ENCODE measurements at regions of chr1 and their contacts with region 1.

Region 1: GRCh38 chr1:198681831-198682759 is 43.3 kb downstream of the PTPRC start:
- DNase-seq: peak; percentile 28 to 96 (median 92)
- ATAC-seq: peak; percentile 89
- H3K4me3 ChIP-seq: peak overlapping the region; percentile 51
- H3K4me3 Mint-ChIP-seq: peak overlapping the region; percentile 74 to 87 (median 77)
- H3K27ac ChIP-seq: peak overlapping the region; percentile 92
- H3K27ac Mint-ChIP-seq: peak overlapping the region; percentile 90 to 99 (median 98)
- H3K4me1 ChIP-seq: peaks cover 88 to 90% of the 10 kb centered on the region in 2 donors
- H3K4me1 Mint-ChIP-seq: peaks cover 53 to 94% (median 81%) of the 10 kb centered on the region in 7 donors
- H3K27me3 ChIP-seq: no peaks in the 10 kb centered on the region
- H3K27me3 Mint-ChIP-seq: peaks cover 0 to 2% (median 0%) of the 10 kb centered on the region in 5 donors

Region 2: DNA sequence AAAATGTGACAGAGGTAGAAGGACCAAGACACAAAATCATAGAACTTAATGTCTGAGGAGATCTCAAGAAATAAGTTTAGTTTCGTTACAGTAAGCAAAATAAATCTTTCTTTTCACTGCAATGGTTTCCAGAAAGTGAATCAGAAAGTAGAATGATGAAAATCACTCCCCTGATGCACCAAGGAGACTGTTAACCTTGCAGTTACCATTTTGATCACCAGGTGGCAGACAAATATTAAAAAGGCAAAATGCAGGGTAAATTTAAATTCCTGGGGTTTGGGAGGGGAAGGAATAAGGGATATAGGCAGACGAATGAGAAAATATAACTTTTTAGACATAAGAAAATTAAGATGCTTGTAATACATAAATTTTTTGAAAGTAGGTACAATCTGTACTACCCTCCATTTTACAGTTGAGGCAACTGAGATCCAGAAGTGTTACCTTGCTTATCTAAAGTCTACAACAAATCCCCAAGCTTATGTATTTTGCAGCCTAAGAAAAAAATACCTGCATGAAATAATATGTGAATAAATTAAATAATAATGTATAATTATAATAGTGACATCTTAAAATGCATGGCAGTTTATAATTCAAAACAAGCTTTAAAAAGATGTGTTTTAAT is 1160.9 kb before region 1 on chr1:
- CTCF ChIA-PET with region 1: no interaction called
- POLR2A ChIA-PET with region 1: no interaction called
- intact Hi-C with region 1: loop called in 1 of 2 experiments (anchors 10 kb)
- DNase-seq: peak in 7 of 9 donors; percentile 2 to 34 (median 24)
- ATAC-seq: no peak
- H3K4me3 ChIP-seq: no peak overlapping the region
- H3K4me3 Mint-ChIP-seq: no peak overlapping the region
- H3K27ac ChIP-seq: no peak overlapping the region
- H3K27ac Mint-ChIP-seq: no peak overlapping the region
- H3K4me1 ChIP-seq: no peaks in the 10 kb centered on the region
- H3K4me1 Mint-ChIP-seq: peaks cover 0 to 5% (median 0%) of the 10 kb centered on the region in 7 donors
- H3K27me3 ChIP-seq: no peaks in the 10 kb centered on the region
- H3K27me3 Mint-ChIP-seq: no peaks in the 10 kb centered on the region

Region 3: DNA sequence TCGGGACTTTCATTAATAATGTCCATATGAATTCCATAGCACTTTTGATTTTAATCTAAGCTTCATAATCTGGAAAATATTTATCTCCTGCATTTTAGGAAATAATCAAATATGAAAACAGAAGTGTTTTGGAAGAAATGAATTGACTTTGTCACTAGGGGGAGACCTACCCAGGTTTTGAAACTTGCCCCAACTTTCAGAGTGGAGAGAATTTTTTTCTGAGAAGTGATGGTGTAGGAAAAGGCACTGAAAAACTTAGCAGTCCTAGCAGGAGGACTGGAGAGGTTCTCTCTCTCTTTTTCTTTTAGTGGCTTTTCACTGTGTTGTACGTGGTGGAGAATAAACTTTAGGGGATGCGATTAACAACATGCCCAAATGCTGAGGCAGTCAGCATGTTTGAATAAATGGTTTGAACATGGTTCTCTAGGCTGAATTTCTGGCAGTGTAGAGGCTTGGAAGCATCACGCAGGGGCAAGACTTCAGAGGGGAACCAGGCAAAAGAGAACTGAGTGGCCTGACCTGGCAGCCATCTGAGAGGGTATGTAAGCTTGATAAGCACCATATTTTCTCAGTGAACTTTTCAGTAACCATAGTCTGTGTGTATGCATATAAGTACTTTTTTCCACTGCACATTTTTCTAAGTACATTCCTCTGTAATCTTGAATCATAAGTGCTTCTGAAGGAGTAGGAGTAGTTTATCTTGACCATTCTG is 593.6 kb before region 1 on chr1:
- CTCF ChIA-PET with region 1: no interaction called
- POLR2A ChIA-PET with region 1: no interaction called
- intact Hi-C with region 1: loop called in 1 of 2 experiments (anchors 2 kb)
- DNase-seq: peak in 6 of 9 donors; percentile 9 to 52 (median 37)
- ATAC-seq: peak; percentile 40
- H3K4me3 ChIP-seq: no peak overlapping the region
- H3K4me3 Mint-ChIP-seq: no peak overlapping the region
- H3K27ac ChIP-seq: no peak overlapping the region
- H3K27ac Mint-ChIP-seq: no peak overlapping the region
- H3K4me1 ChIP-seq: no peaks in the 10 kb centered on the region
- H3K4me1 Mint-ChIP-seq: peaks cover 0 to 7% (median 3%) of the 10 kb centered on the region in 7 donors
- H3K27me3 ChIP-seq: no peaks in the 10 kb centered on the region
- H3K27me3 Mint-ChIP-seq: peaks cover 0 to 8% (median 4%) of the 10 kb centered on the region in 5 donors

Region 4: GRCh38 chr1:198465201-198466144 is 216.6 kb before region 1 on chr1:
- CTCF ChIA-PET with region 1: interaction called, 3 read pairs
- POLR2A ChIA-PET with region 1: no interaction called
- intact Hi-C with region 1: loop called (anchors 2 to 5 kb)
- DNase-seq: peak in 6 of 9 donors; percentile 3 to 57 (median 40)
- ATAC-seq: peak; percentile 71
- H3K4me3 ChIP-seq: no peak overlapping the region
- H3K4me3 Mint-ChIP-seq: no peak overlapping the region
- H3K27ac ChIP-seq: no peak overlapping the region
- H3K27ac Mint-ChIP-seq: no peak overlapping the region
- H3K4me1 ChIP-seq: no peaks in the 10 kb centered on the region
- H3K4me1 Mint-ChIP-seq: peaks cover 0 to 5% (median 0%) of the 10 kb centered on the region in 7 donors
- H3K27me3 ChIP-seq: no peaks in the 10 kb centered on the region
- H3K27me3 Mint-ChIP-seq: no peaks in the 10 kb centered on the region

Region 5: DNA sequence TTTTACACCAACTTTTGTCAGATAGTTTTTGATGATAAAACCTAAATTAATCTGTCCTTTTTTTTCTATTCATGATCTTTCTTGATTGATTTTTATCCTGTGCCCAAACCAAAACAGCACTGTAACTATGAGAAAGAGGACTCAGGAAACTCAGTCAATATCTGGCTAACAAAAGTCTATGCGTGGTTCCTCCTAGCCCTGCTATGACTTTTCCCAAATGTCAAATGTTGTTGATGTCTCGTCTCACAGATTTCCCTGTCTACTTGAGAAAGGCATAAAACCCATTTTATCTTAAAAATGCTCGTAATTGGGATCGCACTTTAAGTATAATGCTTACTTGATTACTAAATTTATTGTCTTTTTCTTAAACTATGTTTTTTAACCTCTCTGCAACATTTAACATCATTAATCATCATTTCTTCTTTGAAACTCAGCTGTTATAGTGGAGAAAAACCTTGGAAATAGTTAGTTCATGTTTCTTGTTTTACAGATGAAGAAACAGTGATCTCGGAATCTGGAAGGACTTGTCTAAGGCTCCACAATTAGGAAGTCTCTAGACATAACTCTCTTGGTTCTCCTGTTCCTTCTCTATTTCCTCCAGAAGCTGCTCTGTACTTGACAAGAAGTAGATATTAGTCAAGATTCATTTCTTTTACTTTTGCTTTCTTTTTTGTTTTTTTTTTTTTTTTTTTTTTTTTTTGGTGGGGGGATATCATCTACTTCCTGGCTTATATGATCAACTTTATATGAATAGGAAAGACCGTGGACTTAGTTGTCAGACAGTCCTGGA is 69.4 kb before region 1 on chr1:
- CTCF ChIA-PET with region 1: interaction called, 5 read pairs
- POLR2A ChIA-PET with region 1: interaction called, 16 read pairs
- intact Hi-C with region 1: loop called in 1 of 2 experiments (anchors 1 kb)
- DNase-seq: peak in 6 of 9 donors; percentile 30 to 52 (median 41)
- ATAC-seq: peak; percentile 62
- H3K4me3 ChIP-seq: peak overlapping the region; percentile 44
- H3K4me3 Mint-ChIP-seq: peak overlapping the region; percentile 66 to 97 (median 82)
- H3K27ac ChIP-seq: peak overlapping the region; percentile 82
- H3K27ac Mint-ChIP-seq: peak overlapping the region; percentile 95 to 100 (median 98)
- H3K4me1 ChIP-seq: peaks cover 56 to 71% of the 10 kb centered on the region in 2 donors
- H3K4me1 Mint-ChIP-seq: peaks cover 52 to 92% (median 73%) of the 10 kb centered on the region in 7 donors
- H3K27me3 ChIP-seq: no peaks in the 10 kb centered on the region
- H3K27me3 Mint-ChIP-seq: no peaks in the 10 kb centered on the region

Region 6: GRCh38 chr1:198638894-198639635 is 43.0 kb before region 1 on chr1 and contains the start of gene PTPRC:
- CTCF ChIA-PET with region 1: interaction called, 6 read pairs
- POLR2A ChIA-PET with region 1: interaction called, 104 read pairs
- intact Hi-C with region 1: loop called (anchors 1 kb)
- DNase-seq: peak in 7 of 9 donors; percentile 46 to 78 (median 68)
- ATAC-seq: peak; percentile 81
- H3K4me3 ChIP-seq: peak within 1 kb of the TSS; percentile 81
- H3K4me3 Mint-ChIP-seq: peak within 1 kb of the TSS; percentile 77 to 100 (median 92)
- H3K27ac ChIP-seq: peak within 1 kb of the TSS; percentile 94
- H3K27ac Mint-ChIP-seq: peak within 1 kb of the TSS; percentile 86 to 98 (median 96)
- H3K4me1 ChIP-seq: peaks cover 31 to 40% of the 10 kb centered on the region in 2 donors
- H3K4me1 Mint-ChIP-seq: peaks cover 39 to 60% (median 52%) of the 10 kb centered on the region in 7 donors
- H3K27me3 ChIP-seq: no peaks in the 10 kb centered on the region
- H3K27me3 Mint-ChIP-seq: no peaks in the 10 kb centered on the region
- total RNA-seq, gene PTPRC: 739 to 1,121 (median 1,015) TPM

Region 7: GRCh38 chr1:198669023-198669698 is 12.9 kb before region 1 on chr1:
- CTCF ChIA-PET with region 1: interaction called, 9 read pairs
- POLR2A ChIA-PET with region 1: interaction called, 117 read pairs
- intact Hi-C with region 1: loop called (anchors 1 kb)
- DNase-seq: peak in 2 of 9 donors; percentile 46 to 53
- ATAC-seq: peak; percentile 81
- H3K4me3 ChIP-seq: peak overlapping the region; percentile 2
- H3K4me3 Mint-ChIP-seq: peak overlapping the region; percentile 48 to 78 (median 71)
- H3K27ac ChIP-seq: peak overlapping the region; percentile 75
- H3K27ac Mint-ChIP-seq: peak overlapping the region; percentile 74 to 98 (median 91)
- H3K4me1 ChIP-seq: peaks cover 79 to 86% of the 10 kb centered on the region in 2 donors
- H3K4me1 Mint-ChIP-seq: peaks cover 61 to 100% (median 95%) of the 10 kb centered on the region in 7 donors
- H3K27me3 ChIP-seq: no peaks in the 10 kb centered on the region
- H3K27me3 Mint-ChIP-seq: no peaks in the 10 kb centered on the region

Measured in naive thymus-derived CD4-positive, alpha-beta T cell (primary cell).